GM23248 (cell line): ENCODE measurements at regions of chr18 and their contacts with region 1.

Region 1: DNA sequence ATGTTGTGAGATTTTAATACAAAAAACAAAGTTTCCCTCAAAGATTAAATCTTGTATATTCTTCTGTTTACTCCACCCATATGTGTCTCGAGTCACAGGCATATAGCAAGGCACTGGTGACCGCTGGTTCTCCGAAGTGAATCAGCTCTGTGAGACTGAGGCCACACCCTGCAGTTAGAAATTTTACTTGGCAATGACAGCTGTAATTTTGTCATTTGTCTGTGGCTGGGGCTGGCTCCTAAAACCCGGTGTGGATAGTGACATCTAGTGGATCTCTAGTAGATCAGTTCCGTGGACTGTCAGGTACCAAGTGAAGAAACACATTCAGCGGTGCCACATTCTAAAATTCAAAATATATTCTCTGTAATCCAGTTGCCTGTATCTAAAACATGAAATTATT is 278.0 kb downstream of the NEDD4L start:
- DNase-seq: peak; percentile 94
- H3K4me3 ChIP-seq: peak overlapping the region; percentile 20; the same call in 1 of the 2 replicates
- H3K27ac ChIP-seq: peak overlapping the region; percentile 60
- H3K4me1 ChIP-seq: peaks cover 17% of the 10 kb centered on the region
- H3K27me3 ChIP-seq: no peaks in the 10 kb centered on the region

Region 2: GRCh38 chr18:58176915-58177717 is 144.9 kb before region 1 on chr18:
- in situ Hi-C with region 1: loop called (anchors 10 kb)
- DNase-seq: peak; percentile 91
- H3K4me3 ChIP-seq: peak overlapping the region; percentile 22; the same call in 1 of the 2 replicates
- H3K27ac ChIP-seq: peak overlapping the region; percentile 41
- H3K4me1 ChIP-seq: peaks cover 14% of the 10 kb centered on the region
- H3K27me3 ChIP-seq: no peaks in the 10 kb centered on the region

Region 3: DNA sequence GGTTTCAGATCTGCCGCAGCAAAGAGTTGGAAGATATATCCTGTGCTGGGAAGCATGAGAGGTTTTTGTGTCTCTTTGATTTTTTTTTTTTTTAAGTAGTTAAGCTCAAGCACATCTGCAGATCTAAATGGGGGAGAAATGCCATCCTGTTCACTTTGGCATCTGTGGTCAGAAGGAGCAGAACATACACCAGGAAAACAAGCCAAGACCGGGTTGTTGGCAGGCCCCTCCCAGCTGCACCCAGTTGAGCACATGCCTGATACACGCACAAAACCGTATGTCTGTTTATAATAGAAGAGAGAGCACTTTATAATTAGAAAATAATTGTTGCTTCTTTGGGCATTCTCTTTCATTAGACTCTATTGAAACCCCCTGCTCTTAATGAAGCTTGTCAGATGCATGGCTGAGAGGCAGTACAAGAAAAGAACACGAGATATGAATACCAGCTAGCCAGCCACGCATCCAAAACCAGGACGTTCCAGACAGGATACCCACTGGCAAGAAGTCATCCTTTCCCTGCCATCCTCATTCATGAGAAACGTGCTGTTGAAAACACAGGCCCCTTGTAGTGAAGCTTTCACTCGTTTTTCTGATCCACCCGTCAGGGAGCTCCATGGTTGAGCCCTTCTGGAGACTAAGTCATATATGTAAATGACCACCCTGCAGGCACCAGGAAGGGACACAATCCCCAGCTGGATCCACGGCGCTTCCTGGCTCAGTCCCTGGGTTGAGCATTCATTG is 154.7 kb after region 1 on chr18:
- in situ Hi-C with region 1: loop called (anchors 10 kb)
- DNase-seq: no peak
- H3K4me3 ChIP-seq: no peak overlapping the region
- H3K27ac ChIP-seq: no peak overlapping the region
- H3K4me1 ChIP-seq: no peaks in the 10 kb centered on the region
- H3K27me3 ChIP-seq: no peaks in the 10 kb centered on the region